ENCODE measurements at regions of chr15 and their contacts with region 1.

Region 1: GRCh38 chr15:41501191-41501917 is 7.7 kb downstream of the ITPKA start:
- DNase-seq: peak; percentile 54
- H3K4me3 Mint-ChIP-seq: peak overlapping the region; percentile 63
- H3K27ac Mint-ChIP-seq: no peak overlapping the region
- H3K4me1 Mint-ChIP-seq: peaks cover 21% of the 10 kb centered on the region
- H3K27me3 Mint-ChIP-seq: peaks cover 69% of the 10 kb centered on the region

Region 2: DNA sequence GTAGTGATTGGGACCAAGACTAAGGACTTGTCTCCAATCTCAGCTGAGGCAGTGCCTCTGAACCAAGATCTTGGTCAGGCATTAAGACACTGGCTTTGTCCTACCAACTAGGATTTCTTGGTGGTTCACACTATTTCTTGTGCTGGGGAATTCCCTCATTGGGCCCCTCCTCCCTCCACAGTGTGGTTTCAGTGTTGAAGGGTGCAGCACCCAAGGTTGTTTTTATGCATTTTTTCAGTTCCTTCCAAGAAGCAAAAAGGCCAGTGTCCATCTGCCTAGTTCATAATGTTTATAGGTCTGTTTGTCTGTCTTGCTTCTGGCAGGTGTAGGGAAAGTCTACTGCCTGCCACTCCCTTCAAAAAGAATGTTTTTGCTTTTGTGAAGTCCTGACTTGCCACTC is 18.2 kb before region 1 on chr15:
- CTCF ChIA-PET with region 1: interaction called, 4 read pairs
- intact Hi-C with region 1: loop called (anchors 2 kb)
- DNase-seq: peak; percentile 75
- H3K4me3 Mint-ChIP-seq: no peak overlapping the region
- H3K27ac Mint-ChIP-seq: peak overlapping the region; percentile 46
- H3K4me1 Mint-ChIP-seq: peaks cover 15% of the 10 kb centered on the region
- H3K27me3 Mint-ChIP-seq: no peaks in the 10 kb centered on the region